ENCODE measurements at regions of chr5 and their contacts with region 1.

Region 1: GRCh38 chr5:87412630-87413342 is at the start of gene CCNH:
- DNase-seq: peak; percentile 96 to 100 (median 98)

Region 2: DNA sequence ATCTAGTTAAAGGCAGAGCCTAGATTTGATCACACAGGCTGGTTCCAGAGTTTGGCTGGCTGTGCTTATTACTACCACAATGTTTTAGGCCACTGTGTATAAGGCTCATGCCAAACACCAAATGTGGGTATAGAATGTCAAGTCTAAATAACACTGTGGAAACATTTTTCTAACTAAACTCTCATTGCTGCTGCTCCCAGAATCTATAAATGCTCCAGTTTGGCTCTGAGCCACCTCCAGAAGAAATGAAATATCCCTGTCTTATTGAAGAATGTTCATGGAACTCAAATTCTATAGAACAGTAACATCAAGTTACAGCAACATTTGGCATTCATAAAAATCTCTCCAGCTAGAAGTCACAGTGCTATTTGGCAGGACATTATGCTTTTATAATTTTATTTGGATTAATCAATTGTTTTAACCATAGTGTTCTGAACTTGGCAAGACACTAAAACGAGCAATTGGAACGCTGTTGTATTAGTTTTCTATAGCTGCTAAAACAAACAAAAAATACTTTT is 973.1 kb before region 1 on chr5:
- intact Hi-C with region 1: no loop called
- DNase-seq: no peak

Region 3: GRCh38 chr5:87770601-87771121 is 357.9 kb after region 1 on chr5:
- intact Hi-C with region 1: loop called (anchors 10 kb)
- DNase-seq: peak; percentile 27 to 88 (median 48)

Region 4: GRCh38 chr5:88680253-88681132 is 1267.7 kb after region 1 on chr5:
- intact Hi-C with region 1: loop called (anchors 10 kb)
- DNase-seq: peak; percentile 80 to 97 (median 90)